Heart right ventricle (tissue), 16 donors: ENCODE measurements at regions of chr3 and their contacts with region 1.

Region 1: GRCh38 chr3:61168301-61168700 is 83.0 kb downstream of the FHIT start:
- DNase-seq: no peak
- ATAC-seq: no peak
- H3K4me3 ChIP-seq: no peak overlapping the region
- H3K27ac ChIP-seq: no peak overlapping the region
- H3K4me1 ChIP-seq: peaks cover 0 to 7% (median 0%) of the 10 kb centered on the region in 9 donors
- H3K27me3 ChIP-seq: no peaks in the 10 kb centered on the region
- CTCF ChIP-seq: no peak

Region 2: GRCh38 chr3:60277361-60277800 is 890.9 kb before region 1 on chr3:
- intact Hi-C with region 1: no loop called
- DNase-seq: no peak
- ATAC-seq: no peak
- H3K4me3 ChIP-seq: no peak overlapping the region
- H3K27ac ChIP-seq: no peak overlapping the region
- H3K4me1 ChIP-seq: no peaks in the 10 kb centered on the region
- H3K27me3 ChIP-seq: no peaks in the 10 kb centered on the region
- CTCF ChIP-seq: no peak

Region 3: DNA sequence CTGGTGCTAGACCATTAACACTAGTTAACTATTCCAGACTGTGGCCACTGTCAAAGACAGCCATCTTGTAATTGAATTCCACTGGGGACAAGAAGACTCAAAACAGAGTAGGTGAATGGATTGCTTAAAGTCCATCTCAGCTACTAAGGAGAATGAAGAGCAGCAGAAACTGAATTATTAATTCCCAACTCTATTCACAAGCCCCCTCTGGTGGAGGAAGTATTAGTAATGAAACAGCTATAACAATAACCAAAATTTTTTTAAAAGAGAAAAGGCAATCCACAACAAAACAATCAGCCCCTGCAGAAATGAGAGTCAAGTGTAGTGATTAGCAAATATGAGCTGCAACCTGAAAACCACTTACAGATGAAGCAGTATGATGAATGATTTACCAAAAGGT is 219.8 kb before region 1 on chr3:
- intact Hi-C with region 1: no loop called
- DNase-seq: no peak
- ATAC-seq: no peak
- H3K4me3 ChIP-seq: no peak overlapping the region
- H3K27ac ChIP-seq: no peak overlapping the region
- H3K4me1 ChIP-seq: peaks cover 0 to 3% (median 0%) of the 10 kb centered on the region in 9 donors
- H3K27me3 ChIP-seq: no peaks in the 10 kb centered on the region
- CTCF ChIP-seq: peak in 4 of 9 donors; percentile 6 to 26 (median 16)

Region 4: GRCh38 chr3:61108247-61109019 is 59.9 kb before region 1 on chr3:
- intact Hi-C with region 1: loop called in 1 of 10 experiments (anchors 10 kb)
- DNase-seq: no peak
- ATAC-seq: no peak
- H3K4me3 ChIP-seq: no peak overlapping the region
- H3K27ac ChIP-seq: no peak overlapping the region
- H3K4me1 ChIP-seq: no peaks in the 10 kb centered on the region
- H3K27me3 ChIP-seq: no peaks in the 10 kb centered on the region
- CTCF ChIP-seq: no peak